Activated CD4-positive, alpha-beta T cell treated with anti-CD3 and anti-CD28 coated beads, Interleukin-2, amount 10 ng/mL, durations not matched to agents 24 days and 14 days (primary cell): ENCODE measurements at regions of chr4 and their contacts with region 1.

Region 1: GRCh38 chr4:145936142-145936996 is 2.3 kb downstream of the ZNF827 start:
- DNase-seq: peak; percentile 89
- H3K4me3 Mint-ChIP-seq: peak overlapping the region; percentile 94
- H3K27ac Mint-ChIP-seq: peak overlapping the region; percentile 97
- H3K4me1 Mint-ChIP-seq: peaks cover 40% of the 10 kb centered on the region
- H3K27me3 Mint-ChIP-seq: no peaks in the 10 kb centered on the region

Region 2: DNA sequence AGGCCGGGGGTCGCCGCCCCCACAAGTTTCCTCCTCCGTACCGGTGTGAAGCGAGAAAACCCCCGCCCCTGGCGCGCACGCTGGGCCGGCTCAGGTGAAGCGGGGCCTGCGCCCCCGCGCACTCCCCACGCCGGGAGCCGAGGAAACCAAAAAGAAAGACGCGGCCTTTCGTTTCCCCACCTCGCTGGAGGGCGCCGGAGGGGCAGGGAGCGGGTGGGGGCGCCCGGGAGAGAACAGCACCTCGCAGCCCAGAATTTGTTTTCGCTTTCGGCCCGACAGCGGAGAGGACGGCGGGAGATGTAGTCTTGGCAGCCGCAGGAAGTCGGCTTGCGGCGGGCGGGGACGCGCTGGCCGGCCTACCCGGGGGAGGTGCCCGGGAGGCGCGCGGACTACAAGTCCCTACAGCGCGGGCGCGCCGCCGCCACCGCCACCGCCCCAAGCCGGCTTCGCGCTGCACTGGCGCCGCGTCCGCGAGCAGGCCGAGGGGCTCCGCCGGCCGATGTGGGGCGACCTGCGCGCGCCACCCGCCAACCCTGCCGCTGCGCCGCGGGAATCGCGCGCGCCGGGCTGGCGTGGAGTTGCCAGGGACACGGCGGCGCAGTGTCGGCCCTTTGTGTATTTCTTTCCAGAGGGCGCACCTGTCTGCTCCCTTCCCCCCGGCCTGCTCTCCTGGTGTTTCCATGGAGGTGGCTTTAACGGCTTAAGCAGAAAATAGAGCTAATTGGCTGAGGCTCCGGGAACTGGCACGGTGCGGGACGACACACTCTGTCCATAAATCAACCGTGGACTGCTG is 755.9 kb before region 1 on chr4 and contains the start of gene OTUD4:
- intact Hi-C with region 1: loop called (anchors 2 kb)
- DNase-seq: peak; percentile 98
- H3K4me3 Mint-ChIP-seq: peak within 1 kb of the TSS; percentile 95
- H3K27ac Mint-ChIP-seq: peak within 1 kb of the TSS; percentile 97
- H3K4me1 Mint-ChIP-seq: peaks cover 24% of the 10 kb centered on the region
- H3K27me3 Mint-ChIP-seq: peaks cover 3% of the 10 kb centered on the region
- total RNA-seq, gene OTUD4: 81.2 and 86.4 TPM in 2 replicates

Region 3: DNA sequence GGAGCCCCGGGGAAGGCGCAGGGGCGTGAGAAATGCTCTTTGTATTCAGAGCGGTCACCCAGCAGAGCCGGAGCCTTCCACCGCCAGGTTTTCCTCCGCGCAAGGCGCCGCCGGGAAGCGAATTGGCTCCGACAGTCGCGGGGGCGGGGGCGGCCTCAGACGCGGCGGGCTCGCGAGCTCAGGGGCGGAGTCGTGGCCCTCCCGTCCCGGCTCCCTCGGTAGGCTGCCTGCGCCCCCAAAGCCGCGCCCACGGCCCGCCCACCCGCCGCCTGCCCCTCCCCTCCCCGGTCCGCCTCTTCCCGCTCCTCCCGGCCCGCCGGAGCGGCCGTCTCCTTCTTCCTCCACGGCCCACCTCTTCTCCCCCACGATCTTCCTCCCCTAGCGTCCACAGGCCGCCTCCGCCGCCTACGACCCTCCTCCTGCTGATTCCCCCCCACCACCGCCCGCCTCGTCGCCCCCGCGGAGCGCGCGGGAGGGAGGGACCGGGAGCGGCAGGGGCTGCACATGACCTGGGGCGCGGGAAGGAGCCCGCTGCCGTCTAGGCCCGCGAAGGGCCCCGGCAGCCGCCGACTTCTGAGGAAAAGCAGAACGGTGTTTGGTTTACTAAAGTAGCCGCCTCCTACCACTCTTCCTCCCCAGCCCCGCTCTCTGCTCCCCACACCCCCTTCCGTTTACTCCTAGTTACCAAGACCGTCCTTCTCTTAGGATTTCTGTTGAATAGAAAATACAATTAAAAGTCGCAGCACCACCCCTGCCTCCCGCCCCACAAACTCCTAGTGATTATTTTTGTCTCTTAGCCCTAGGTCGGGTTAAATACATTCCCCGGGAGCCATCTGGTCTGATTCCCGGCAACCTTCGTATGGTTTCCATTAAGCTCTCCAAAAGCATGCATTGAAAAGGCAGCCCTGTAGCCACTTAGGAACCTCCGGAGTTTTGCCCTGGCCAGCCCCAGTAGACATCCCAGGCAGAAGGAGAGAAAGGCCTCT is 203.2 kb before region 1 on chr4:
- intact Hi-C with region 1: loop called (anchors 5 kb)
- DNase-seq: peak; percentile 96
- H3K4me3 Mint-ChIP-seq: peak overlapping the region; percentile 77
- H3K27ac Mint-ChIP-seq: peak overlapping the region; percentile 76
- H3K4me1 Mint-ChIP-seq: peaks cover 18% of the 10 kb centered on the region
- H3K27me3 Mint-ChIP-seq: peaks cover 2% of the 10 kb centered on the region

Region 4: GRCh38 chr4:145829629-145830395 is 106.6 kb before region 1 on chr4:
- intact Hi-C with region 1: loop called (anchors 1 kb)
- DNase-seq: peak; percentile 70
- H3K4me3 Mint-ChIP-seq: peak overlapping the region; percentile 76
- H3K27ac Mint-ChIP-seq: peak overlapping the region; percentile 87
- H3K4me1 Mint-ChIP-seq: peaks cover 43% of the 10 kb centered on the region
- H3K27me3 Mint-ChIP-seq: no peaks in the 10 kb centered on the region

Region 5: DNA sequence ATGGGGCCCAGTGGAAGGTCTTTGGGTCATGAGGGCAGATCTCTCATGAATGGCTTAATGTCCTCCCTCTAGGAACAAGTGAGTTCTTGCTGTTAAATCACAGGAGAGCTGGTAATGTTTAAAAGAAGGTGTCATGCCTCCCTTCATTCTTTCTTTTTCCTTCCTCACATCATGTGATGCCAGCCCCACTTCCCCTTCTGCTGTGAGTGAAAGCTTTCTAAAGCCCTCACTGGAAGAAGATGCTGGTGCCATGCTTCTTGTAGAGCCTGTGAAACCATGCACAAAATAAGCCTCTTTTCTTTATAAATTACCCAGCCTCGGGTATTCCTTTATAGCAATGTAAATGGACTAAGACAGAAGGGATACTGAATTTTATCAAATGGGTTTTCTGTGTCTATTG is 68.4 kb after region 1 on chr4:
- intact Hi-C with region 1: no loop called
- DNase-seq: no peak
- H3K4me3 Mint-ChIP-seq: no peak overlapping the region
- H3K27ac Mint-ChIP-seq: no peak overlapping the region
- H3K4me1 Mint-ChIP-seq: no peaks in the 10 kb centered on the region
- H3K27me3 Mint-ChIP-seq: peaks cover 7% of the 10 kb centered on the region

Region 6: DNA sequence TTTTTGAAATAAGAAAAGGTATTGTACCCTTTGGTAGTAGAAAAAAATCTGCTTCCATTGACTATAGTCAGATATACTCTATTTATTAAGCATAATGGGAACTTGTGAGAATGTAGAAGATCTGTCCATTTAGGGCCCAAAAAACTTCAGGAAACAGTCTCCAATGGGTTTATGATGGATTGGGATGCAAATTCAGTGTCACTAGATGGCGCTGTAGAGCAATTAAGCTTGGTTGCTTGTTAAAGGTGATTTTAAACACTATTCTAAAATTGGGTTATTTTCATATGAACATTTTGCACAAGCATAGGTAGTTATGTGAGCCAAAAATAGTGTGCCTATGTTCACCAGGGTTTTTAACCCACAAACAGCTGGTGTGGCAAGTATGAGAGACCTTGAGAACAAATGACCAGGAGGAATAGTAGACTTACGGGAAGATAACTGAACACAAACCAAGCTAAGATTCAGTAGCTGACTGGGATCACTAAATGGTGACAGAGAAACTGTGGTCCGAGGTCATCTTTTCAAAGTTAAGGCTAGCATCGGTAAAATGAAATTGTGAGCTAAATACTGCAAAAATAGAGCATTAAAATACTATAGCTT is 158.8 kb after region 1 on chr4:
- intact Hi-C with region 1: loop called (anchors 10 kb)
- DNase-seq: peak; percentile 77
- H3K4me3 Mint-ChIP-seq: no peak overlapping the region
- H3K27ac Mint-ChIP-seq: no peak overlapping the region
- H3K4me1 Mint-ChIP-seq: no peaks in the 10 kb centered on the region
- H3K27me3 Mint-ChIP-seq: peaks cover 10% of the 10 kb centered on the region

Region 7: GRCh38 chr4:146450524-146450923 is 514.2 kb after region 1 on chr4:
- intact Hi-C with region 1: loop called (anchors 10 kb)
- DNase-seq: no peak
- H3K4me3 Mint-ChIP-seq: peak overlapping the region; percentile 56
- H3K27ac Mint-ChIP-seq: peak overlapping the region; percentile 84
- H3K4me1 Mint-ChIP-seq: peaks cover 23% of the 10 kb centered on the region
- H3K27me3 Mint-ChIP-seq: no peaks in the 10 kb centered on the region